ENCODE measurements at regions of chr6 and their contacts with region 1.

Region 1: DNA sequence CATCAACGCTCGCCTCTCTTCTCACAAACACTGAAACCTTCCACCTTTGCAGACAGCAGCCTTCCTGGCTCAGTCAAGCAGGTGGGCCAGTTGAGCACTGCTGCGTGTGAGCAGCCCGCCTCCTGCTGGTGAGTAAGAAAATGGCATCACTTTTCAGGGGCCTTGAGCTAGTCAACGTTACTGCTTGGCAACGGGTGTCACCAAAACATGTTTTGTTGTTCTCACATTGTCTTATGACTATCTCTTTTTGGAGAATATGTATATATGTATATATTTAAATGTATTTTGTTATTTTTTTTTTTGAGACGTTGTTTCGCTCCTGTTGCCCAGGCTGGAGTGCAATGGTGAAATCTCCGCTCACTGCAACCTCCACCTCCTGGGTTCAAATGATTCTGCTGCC is 97.0 kb upstream of the AGPAT4 start:
- DNase-seq: peak; percentile 60
- ATAC-seq: peak; percentile 80
- H3K4me3 ChIP-seq: no peak overlapping the region
- H3K27ac ChIP-seq: no peak overlapping the region
- H3K4me1 ChIP-seq: peaks cover 7% of the 10 kb centered on the region
- H3K27me3 ChIP-seq: 0 out of 5 replicates have a peak, but pooled peaks cover 0 to 4% of the 10 kb centered on the region in 2 experiments
- CTCF ChIP-seq: peak; percentile 96
- EP300 ChIP-seq: no peak
- POLR2A ChIP-seq: no peak
- RAD21 ChIP-seq: peak; percentile 81

Region 2: DNA sequence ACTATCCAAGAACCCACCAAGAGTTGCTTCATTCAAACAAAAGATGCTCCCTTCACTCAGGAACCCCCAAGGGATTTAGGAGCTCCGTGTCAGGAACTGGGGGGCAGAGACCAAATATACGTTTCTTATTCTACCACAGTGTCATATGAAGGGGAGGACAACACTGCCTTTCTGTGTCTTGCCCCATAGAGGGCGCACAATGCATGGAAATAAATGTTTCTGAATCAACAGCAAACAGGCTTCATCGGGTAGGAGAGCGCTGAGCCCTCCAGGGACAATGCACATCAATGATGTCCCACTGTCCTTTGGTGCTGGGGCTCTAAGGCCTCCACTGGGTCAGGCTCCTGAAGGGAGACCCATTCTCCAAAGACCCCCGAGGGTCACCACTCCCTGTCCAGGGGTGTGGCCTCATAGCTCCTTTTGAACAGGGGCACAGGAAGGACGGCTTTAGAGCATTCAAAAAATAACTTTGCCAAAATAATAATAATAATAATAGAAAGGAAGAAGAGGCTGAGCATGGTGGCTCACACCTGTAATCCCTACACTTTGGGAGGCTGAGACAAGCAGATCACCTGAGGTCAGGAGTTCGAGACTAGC is 637.7 kb before region 1 on chr6:
- CTCF ChIA-PET with region 1: interaction called, 12 read pairs
- POLR2A ChIA-PET with region 1: no interaction called
- in situ Hi-C with region 1: loop called (anchors 25 kb)
- intact Hi-C with region 1: no loop called
- DNase-seq: peak; percentile 47
- ATAC-seq: peak; percentile 86
- H3K4me3 ChIP-seq: no peak overlapping the region
- H3K27ac ChIP-seq: no peak overlapping the region
- H3K4me1 ChIP-seq: no peaks in the 10 kb centered on the region
- H3K27me3 ChIP-seq: no peaks in the 10 kb centered on the region
- CTCF ChIP-seq: peak; percentile 86
- EP300 ChIP-seq: no peak
- POLR2A ChIP-seq: no peak
- RAD21 ChIP-seq: peak; percentile 53

Region 3: GRCh38 chr6:160790028-160790792 is 580.7 kb before region 1 on chr6:
- CTCF ChIA-PET with region 1: interaction called, 12 read pairs
- POLR2A ChIA-PET with region 1: no interaction called
- in situ Hi-C with region 1: no loop called
- intact Hi-C with region 1: no loop called
- DNase-seq: no peak
- ATAC-seq: no peak
- H3K4me3 ChIP-seq: no peak overlapping the region
- H3K27ac ChIP-seq: no peak overlapping the region
- H3K4me1 ChIP-seq: no peaks in the 10 kb centered on the region
- H3K27me3 ChIP-seq: no peaks in the 10 kb centered on the region; a peak in 1 of 5 replicates
- CTCF ChIP-seq: peak; percentile 36
- EP300 ChIP-seq: no peak
- POLR2A ChIP-seq: no peak
- RAD21 ChIP-seq: no peak

Region 4: GRCh38 chr6:160992061-160992979 is 378.6 kb before region 1 on chr6:
- CTCF ChIA-PET with region 1: no interaction called
- POLR2A ChIA-PET with region 1: no interaction called
- in situ Hi-C with region 1: no loop called
- intact Hi-C with region 1: loop called (anchors 1 kb)
- DNase-seq: peak; percentile 79
- ATAC-seq: peak; percentile 71
- H3K4me3 ChIP-seq: peak overlapping the region; percentile 94 to 96 (median 96)
- H3K27ac ChIP-seq: peak overlapping the region; percentile 89
- H3K4me1 ChIP-seq: peaks cover 25% of the 10 kb centered on the region
- H3K27me3 ChIP-seq: peaks cover 0 to 13% of the 10 kb centered on the region in 2 experiments; a peak in 2 of 5 replicates
- CTCF ChIP-seq: peak; percentile 82
- EP300 ChIP-seq: no peak
- POLR2A ChIP-seq: peak in 1 of 2 experiments; percentile 52; a peak in 2 of 4 replicates
- RAD21 ChIP-seq: peak; percentile 17; the same call in 1 of the 2 replicates

Region 5: GRCh38 chr6:161101517-161101916 is 269.4 kb before region 1 on chr6:
- CTCF ChIA-PET with region 1: interaction called, 8 read pairs
- POLR2A ChIA-PET with region 1: no interaction called
- in situ Hi-C with region 1: loop called (anchors 5 kb)
- intact Hi-C with region 1: loop called (anchors 1 kb)
- DNase-seq: no peak
- ATAC-seq: peak; percentile 84
- H3K4me3 ChIP-seq: no peak overlapping the region
- H3K27ac ChIP-seq: no peak overlapping the region
- H3K4me1 ChIP-seq: no peaks in the 10 kb centered on the region
- H3K27me3 ChIP-seq: no peaks in the 10 kb centered on the region
- CTCF ChIP-seq: peak; percentile 64
- EP300 ChIP-seq: no peak
- POLR2A ChIP-seq: no peak
- RAD21 ChIP-seq: peak; percentile 46; the same call in 1 of the 2 replicates

Region 6: DNA sequence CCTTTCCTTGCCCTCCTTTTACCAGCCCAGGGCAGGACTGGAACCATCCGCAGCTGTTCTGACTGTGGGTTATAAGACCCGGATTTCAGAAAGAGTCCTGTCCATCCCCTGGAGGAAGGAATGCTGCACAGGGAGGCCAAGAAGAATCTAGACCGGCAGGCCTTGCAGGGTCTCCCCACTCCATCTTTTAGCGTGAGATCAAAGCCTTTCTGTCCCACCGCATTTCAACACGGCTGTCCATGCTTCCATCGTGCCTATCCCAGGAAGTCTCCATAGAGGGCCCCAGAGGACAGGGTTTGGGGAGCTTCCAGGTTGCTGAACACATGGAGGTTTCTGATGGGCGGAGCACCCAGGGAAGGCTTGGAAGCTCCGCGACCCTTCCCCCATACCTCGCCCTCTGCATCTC is 17.7 kb before region 1 on chr6:
- CTCF ChIA-PET with region 1: no interaction called
- POLR2A ChIA-PET with region 1: no interaction called
- in situ Hi-C with region 1: no loop called
- intact Hi-C with region 1: loop called (anchors 2 kb)
- DNase-seq: peak; percentile 46
- ATAC-seq: peak; percentile 85
- H3K4me3 ChIP-seq: no peak overlapping the region
- H3K27ac ChIP-seq: no peak overlapping the region
- H3K4me1 ChIP-seq: no peaks in the 10 kb centered on the region
- H3K27me3 ChIP-seq: no peaks in the 10 kb centered on the region
- CTCF ChIP-seq: peak; percentile 61
- EP300 ChIP-seq: no peak
- POLR2A ChIP-seq: no peak
- RAD21 ChIP-seq: no peak

Region 7: DNA sequence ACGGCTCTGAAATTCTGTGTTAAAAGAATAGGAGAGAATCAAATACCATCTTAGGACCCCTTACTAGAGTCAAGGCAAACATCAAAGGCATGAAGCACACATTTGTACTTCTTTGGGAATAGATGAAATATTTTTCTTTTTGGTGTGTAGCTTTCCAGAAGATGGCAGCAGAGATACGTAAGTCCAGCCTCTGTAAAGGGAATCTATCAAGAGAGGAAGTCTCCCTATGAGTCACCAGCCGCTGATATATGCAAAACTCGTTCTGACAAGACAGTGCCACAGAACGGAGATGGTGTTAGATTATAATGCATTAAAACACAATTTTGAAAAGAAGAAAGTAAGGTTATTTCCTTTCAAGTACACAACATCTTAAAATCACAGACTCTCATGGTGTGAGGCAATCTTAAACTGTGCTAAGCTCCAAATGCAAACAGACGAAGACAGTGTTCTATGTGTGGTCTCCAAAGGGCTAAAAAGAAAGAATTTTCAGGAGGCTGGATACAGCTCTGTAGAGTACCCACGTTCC is 23.0 kb after region 1 on chr6:
- CTCF ChIA-PET with region 1: no interaction called
- POLR2A ChIA-PET with region 1: no interaction called
- in situ Hi-C with region 1: no loop called
- intact Hi-C with region 1: no loop called
- DNase-seq: peak; percentile 71
- ATAC-seq: peak; percentile 97
- H3K4me3 ChIP-seq: no peak overlapping the region
- H3K27ac ChIP-seq: no peak overlapping the region
- H3K4me1 ChIP-seq: no peaks in the 10 kb centered on the region
- H3K27me3 ChIP-seq: no peaks in the 10 kb centered on the region; a peak in 2 of 5 replicates
- CTCF ChIP-seq: peak; percentile 76
- EP300 ChIP-seq: no peak
- POLR2A ChIP-seq: no peak
- RAD21 ChIP-seq: peak; percentile 60; the same call in 1 of the 2 replicates

Region 8: GRCh38 chr6:162123797-162124196 is 752.9 kb after region 1 on chr6:
- CTCF ChIA-PET with region 1: no interaction called
- POLR2A ChIA-PET with region 1: no interaction called
- in situ Hi-C with region 1: no loop called
- intact Hi-C with region 1: no loop called
- DNase-seq: no peak
- ATAC-seq: peak; percentile 49
- H3K4me3 ChIP-seq: no peak overlapping the region
- H3K27ac ChIP-seq: no peak overlapping the region
- H3K4me1 ChIP-seq: no peaks in the 10 kb centered on the region
- H3K27me3 ChIP-seq: no peaks in the 10 kb centered on the region
- CTCF ChIP-seq: no peak
- EP300 ChIP-seq: no peak
- POLR2A ChIP-seq: no peak
- RAD21 ChIP-seq: no peak